Transverse colon (tissue), 4 donors: ENCODE measurements at regions of chr5 and their contacts with region 1.

Region 1: DNA sequence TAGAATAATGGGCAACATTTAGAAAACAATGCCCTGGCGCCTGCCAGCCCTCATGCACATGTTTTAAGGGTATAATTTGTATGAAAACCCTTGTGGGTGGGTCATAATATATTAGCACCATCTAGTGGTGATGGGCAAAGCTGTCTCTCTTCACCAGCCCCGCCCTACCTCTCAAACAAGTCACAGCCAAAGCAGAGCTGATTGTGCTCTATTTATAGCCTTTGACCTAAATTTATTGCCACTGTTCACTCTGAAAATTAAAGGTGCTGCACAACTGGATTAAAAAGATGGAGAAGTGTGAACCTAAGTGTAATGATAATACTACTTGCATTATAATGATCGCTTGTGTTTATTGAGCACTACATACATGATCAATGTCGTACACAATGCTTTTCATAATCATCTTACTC is 131.9 kb upstream of the ANKH start:
- DNase-seq: peak; percentile 58
- H3K4me3 ChIP-seq: no peak overlapping the region
- H3K27ac ChIP-seq: no peak overlapping the region
- H3K4me1 ChIP-seq: peaks cover 8 to 25% (median 14%) of the 10 kb centered on the region in 4 donors
- H3K27me3 ChIP-seq: no peaks in the 10 kb centered on the region
- CTCF ChIP-seq: peak; percentile 72 to 84 (median 79)
- EP300 ChIP-seq: no peak
- POLR2A ChIP-seq: no peak

Region 2: DNA sequence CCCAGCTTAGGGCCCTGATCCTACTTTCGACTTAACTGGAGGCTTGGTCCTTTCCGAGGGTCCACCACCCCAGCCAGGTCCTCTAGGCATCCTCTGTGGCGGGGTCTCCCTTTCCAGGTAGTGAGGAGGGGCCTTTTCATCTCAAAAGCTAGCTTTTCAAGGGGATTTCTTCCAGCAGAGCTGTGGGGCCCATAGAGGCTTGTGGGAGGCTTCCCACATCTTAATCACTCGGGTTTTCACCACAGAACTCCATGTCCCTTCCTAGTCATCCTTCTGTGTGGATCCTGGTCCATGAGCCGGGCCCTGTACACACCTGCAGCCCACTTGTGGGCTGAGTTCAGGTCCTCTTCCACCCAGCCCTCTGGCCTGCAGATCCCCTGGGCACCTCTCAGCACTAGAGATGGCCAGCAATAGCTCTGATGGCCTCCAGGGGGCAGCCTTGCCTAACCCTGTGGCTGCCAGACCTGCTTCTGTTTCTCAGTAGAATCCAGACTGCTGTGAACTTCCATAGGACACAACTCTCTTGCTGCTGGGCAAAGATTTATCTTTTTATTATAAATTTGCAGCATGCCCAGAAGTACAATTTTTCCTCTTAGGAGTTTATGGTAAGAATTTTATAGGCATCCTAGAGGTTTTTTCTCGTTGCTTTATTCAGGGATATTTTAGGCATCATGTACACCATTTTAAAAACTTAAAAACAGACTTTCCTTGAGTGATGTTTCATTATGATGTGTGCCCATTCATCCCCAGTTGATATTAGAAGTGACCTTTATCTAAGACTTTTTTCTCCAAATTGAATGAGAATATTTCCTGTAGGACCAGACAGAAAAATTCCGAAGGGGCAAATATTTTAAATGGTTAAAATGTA is 651.4 kb before region 1 on chr5:
- in situ Hi-C with region 1: loop called in 3 of 4 experiments (anchors 25 kb)
- intact Hi-C with region 1: no loop called
- DNase-seq: peak; percentile 66
- H3K4me3 ChIP-seq: no peak overlapping the region
- H3K27ac ChIP-seq: no peak overlapping the region
- H3K4me1 ChIP-seq: peaks cover 0 to 4% (median 0%) of the 10 kb centered on the region in 4 donors
- H3K27me3 ChIP-seq: no peaks in the 10 kb centered on the region
- CTCF ChIP-seq: peak; percentile 79 to 95 (median 95)
- EP300 ChIP-seq: no peak
- POLR2A ChIP-seq: no peak

Region 3: GRCh38 chr5:14727428-14727865 is 276.1 kb before region 1 on chr5:
- in situ Hi-C with region 1: loop called in 3 of 4 experiments (anchors 5 to 10 kb)
- intact Hi-C with region 1: no loop called
- DNase-seq: peak; percentile 79
- H3K4me3 ChIP-seq: no peak overlapping the region
- H3K27ac ChIP-seq: no peak overlapping the region
- H3K4me1 ChIP-seq: peaks cover 0 to 18% (median 10%) of the 10 kb centered on the region in 4 donors
- H3K27me3 ChIP-seq: no peaks in the 10 kb centered on the region
- CTCF ChIP-seq: peak; percentile 93 to 95 (median 93)
- EP300 ChIP-seq: no peak
- POLR2A ChIP-seq: no peak

Region 4: GRCh38 chr5:14781106-14781505 is 222.4 kb before region 1 on chr5:
- in situ Hi-C with region 1: no loop called
- intact Hi-C with region 1: no loop called
- DNase-seq: no peak
- H3K4me3 ChIP-seq: no peak overlapping the region
- H3K27ac ChIP-seq: no peak overlapping the region
- H3K4me1 ChIP-seq: peaks cover 0 to 14% (median 10%) of the 10 kb centered on the region in 4 donors
- H3K27me3 ChIP-seq: no peaks in the 10 kb centered on the region
- CTCF ChIP-seq: no peak
- EP300 ChIP-seq: no peak
- POLR2A ChIP-seq: no peak

Region 5: DNA sequence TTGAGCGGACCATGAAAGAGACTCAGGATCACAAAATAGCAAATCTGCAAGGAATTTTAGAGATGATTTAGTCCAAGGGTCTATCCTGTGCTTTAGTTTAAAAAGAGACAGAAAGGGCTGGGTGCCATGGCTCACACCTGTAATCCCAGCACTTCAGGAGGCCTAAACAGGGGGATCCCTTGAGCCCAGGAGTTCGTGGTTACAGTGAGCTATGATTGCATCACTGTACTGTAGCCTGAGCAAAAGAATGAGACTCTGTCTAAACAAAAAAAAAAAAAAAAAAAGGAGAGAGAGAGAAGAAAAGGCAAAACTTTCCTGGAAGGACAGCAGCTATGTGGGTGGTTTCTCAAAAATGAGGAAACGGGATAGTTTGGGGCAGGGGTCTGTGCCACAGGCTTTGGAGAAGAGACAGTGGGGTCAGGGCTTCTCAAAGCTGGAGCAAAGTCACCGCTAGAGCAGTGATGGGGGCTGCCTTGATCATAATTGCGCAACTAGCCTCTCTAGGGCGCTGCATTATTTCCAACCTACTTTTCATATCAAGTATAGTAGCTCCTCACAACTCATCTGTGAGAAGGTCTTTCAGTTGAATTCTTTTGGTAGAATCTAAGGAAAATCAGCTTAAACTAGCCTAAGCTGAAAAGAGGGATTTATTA is 123.5 kb before region 1 on chr5:
- in situ Hi-C with region 1: loop called in 2 of 4 experiments (anchors 5 to 10 kb)
- intact Hi-C with region 1: no loop called
- DNase-seq: no peak
- H3K4me3 ChIP-seq: no peak overlapping the region
- H3K27ac ChIP-seq: no peak overlapping the region
- H3K4me1 ChIP-seq: no peaks in the 10 kb centered on the region
- H3K27me3 ChIP-seq: no peaks in the 10 kb centered on the region
- CTCF ChIP-seq: no peak
- EP300 ChIP-seq: no peak
- POLR2A ChIP-seq: no peak